ENCODE measurements at regions of chr6 and their contacts with region 1.

Region 1: GRCh38 chr6:144778773-144779492 is 493.8 kb downstream of the UTRN start:
- DNase-seq: no peak
- H3K4me3 ChIP-seq: no peak overlapping the region
- H3K27ac ChIP-seq: no peak overlapping the region
- H3K4me1 ChIP-seq: no peaks in the 10 kb centered on the region; a peak in 3 of 7 replicates
- H3K27me3 ChIP-seq: no peaks in the 10 kb centered on the region
- CTCF ChIP-seq: peak in 2 of 3 experiments; percentile 16 to 38; a peak in 2 of 4 replicates
- EP300 ChIP-seq: no peak
- POLR2A ChIP-seq: no peak
- RAD21 ChIP-seq: peak; percentile 36 to 51; a peak in 3 of 4 replicates

Region 2: DNA sequence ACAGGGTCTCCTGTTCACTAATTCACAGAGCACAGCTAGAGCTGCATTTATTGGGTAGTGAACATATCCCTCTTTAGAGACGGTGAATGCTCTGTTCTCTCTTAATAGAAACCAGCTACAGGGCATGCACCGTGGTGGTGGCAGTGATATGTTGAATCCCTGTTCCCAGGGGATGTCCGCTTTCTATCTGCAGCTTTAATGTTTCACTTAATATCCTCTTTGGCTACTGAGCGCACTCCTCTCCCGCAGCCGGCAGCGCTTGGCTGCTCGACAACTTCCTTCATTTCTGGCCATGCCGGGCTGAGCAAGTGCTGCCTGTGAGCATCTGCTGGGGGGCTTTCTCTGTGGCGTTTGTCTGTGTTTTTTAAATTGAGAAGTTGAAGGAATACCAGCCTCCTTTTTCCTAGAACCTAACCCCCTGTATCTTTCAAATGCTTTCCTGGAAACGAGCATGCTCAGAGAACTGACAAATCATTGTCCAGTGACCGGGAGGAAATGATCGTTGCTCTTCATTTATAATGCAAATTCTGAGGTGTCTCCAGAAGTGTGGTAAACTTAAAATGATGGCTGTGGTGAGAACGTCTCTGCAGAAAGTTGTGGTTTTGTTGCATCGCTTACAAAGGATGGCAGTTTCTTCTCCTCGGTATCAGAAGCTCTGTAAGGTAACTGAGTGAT is 195.9 kb before region 1 on chr6:
- CTCF ChIA-PET with region 1: interaction called, 15 read pairs
- POLR2A ChIA-PET with region 1: no interaction called
- DNase-seq: peak in 1 of 2 experiments; percentile 53
- H3K4me3 ChIP-seq: peak overlapping the region; percentile 12 to 52 (median 30); a peak in 7 of 8 replicates
- H3K27ac ChIP-seq: no peak overlapping the region
- H3K4me1 ChIP-seq: peaks cover 0 to 11% (median 5%) of the 10 kb centered on the region in 4 experiments; a peak in 5 of 7 replicates
- H3K27me3 ChIP-seq: no peaks in the 10 kb centered on the region
- CTCF ChIP-seq: no peak
- EP300 ChIP-seq: no peak
- POLR2A ChIP-seq: no peak
- RAD21 ChIP-seq: no peak

Region 3: GRCh38 chr6:144613859-144614258 is 165.1 kb before region 1 on chr6:
- CTCF ChIA-PET with region 1: no interaction called
- POLR2A ChIA-PET with region 1: no interaction called
- DNase-seq: no peak
- H3K4me3 ChIP-seq: no peak overlapping the region
- H3K27ac ChIP-seq: no peak overlapping the region
- H3K4me1 ChIP-seq: peaks cover 3 to 21% (median 8%) of the 10 kb centered on the region in 4 experiments
- H3K27me3 ChIP-seq: no peaks in the 10 kb centered on the region
- CTCF ChIP-seq: no peak
- EP300 ChIP-seq: no peak
- POLR2A ChIP-seq: no peak
- RAD21 ChIP-seq: no peak

Region 4: GRCh38 chr6:144675231-144675861 is 103.6 kb before region 1 on chr6:
- CTCF ChIA-PET with region 1: no interaction called
- POLR2A ChIA-PET with region 1: no interaction called
- DNase-seq: no peak
- H3K4me3 ChIP-seq: no peak overlapping the region
- H3K27ac ChIP-seq: no peak overlapping the region
- H3K4me1 ChIP-seq: no peaks in the 10 kb centered on the region; a peak in 1 of 7 replicates
- H3K27me3 ChIP-seq: no peaks in the 10 kb centered on the region
- CTCF ChIP-seq: no peak
- EP300 ChIP-seq: no peak
- POLR2A ChIP-seq: no peak
- RAD21 ChIP-seq: no peak

Region 5: GRCh38 chr6:144797881-144798595 is 19.1 kb after region 1 on chr6:
- CTCF ChIA-PET with region 1: interaction called, 23 read pairs
- POLR2A ChIA-PET with region 1: no interaction called
- DNase-seq: no peak
- H3K4me3 ChIP-seq: no peak overlapping the region
- H3K27ac ChIP-seq: no peak overlapping the region
- H3K4me1 ChIP-seq: no peaks in the 10 kb centered on the region
- H3K27me3 ChIP-seq: no peaks in the 10 kb centered on the region
- CTCF ChIP-seq: no peak
- EP300 ChIP-seq: no peak
- POLR2A ChIP-seq: no peak
- RAD21 ChIP-seq: no peak